Naive thymus-derived CD4-positive, alpha-beta T cell (primary cell): ENCODE measurements at regions of chr6 and their contacts with region 1.

Region 1: GRCh38 chr6:33271458-33272274 is at the starts of genes RPS18 and VPS52:
- DNase-seq: peak; percentile 84 to 97 (median 93)
- ATAC-seq: peak; percentile 91
- H3K4me3 ChIP-seq: peak within 1 kb of the TSS; percentile 93
- H3K4me3 Mint-ChIP-seq: peak within 1 kb of the TSS; percentile 87 to 100 (median 98)
- H3K27ac ChIP-seq: peak within 1 kb of the TSS; percentile 91
- H3K27ac Mint-ChIP-seq: peak within 1 kb of the TSS; percentile 95 to 100 (median 99)
- H3K4me1 ChIP-seq: peaks cover 41 to 44% of the 10 kb centered on the region in 2 donors
- H3K4me1 Mint-ChIP-seq: peaks cover 34 to 81% (median 66%) of the 10 kb centered on the region in 7 donors
- H3K27me3 ChIP-seq: no peaks in the 10 kb centered on the region
- H3K27me3 Mint-ChIP-seq: peaks cover 0 to 3% (median 0%) of the 10 kb centered on the region in 5 donors
- total RNA-seq, gene RPS18: 2,454 to 4,896 (median 3,431) TPM
- total RNA-seq, gene VPS52: 74.3 to 110 (median 90.5) TPM

Region 2: GRCh38 chr6:32843979-32844838 is 427.5 kb before region 1 on chr6 and contains the start of gene PSMB8:
- CTCF ChIA-PET with region 1: no interaction called
- POLR2A ChIA-PET with region 1: interaction called, 11 read pairs
- intact Hi-C with region 1: no loop called
- DNase-seq: peak; percentile 92 to 99 (median 97)
- ATAC-seq: peak; percentile 90
- H3K4me3 ChIP-seq: peak within 1 kb of the TSS; percentile 97
- H3K4me3 Mint-ChIP-seq: peak within 1 kb of the TSS; percentile 92 to 99 (median 98)
- H3K27ac ChIP-seq: peak within 1 kb of the TSS; percentile 97
- H3K27ac Mint-ChIP-seq: peak within 1 kb of the TSS; percentile 99 to 100 (median 100)
- H3K4me1 ChIP-seq: peaks cover 71 to 72% of the 10 kb centered on the region in 2 donors
- H3K4me1 Mint-ChIP-seq: peaks cover 66 to 83% (median 79%) of the 10 kb centered on the region in 7 donors
- H3K27me3 ChIP-seq: no peaks in the 10 kb centered on the region
- H3K27me3 Mint-ChIP-seq: no peaks in the 10 kb centered on the region
- total RNA-seq, gene PSMB8: 111 to 419 (median 115) TPM

Region 3: DNA sequence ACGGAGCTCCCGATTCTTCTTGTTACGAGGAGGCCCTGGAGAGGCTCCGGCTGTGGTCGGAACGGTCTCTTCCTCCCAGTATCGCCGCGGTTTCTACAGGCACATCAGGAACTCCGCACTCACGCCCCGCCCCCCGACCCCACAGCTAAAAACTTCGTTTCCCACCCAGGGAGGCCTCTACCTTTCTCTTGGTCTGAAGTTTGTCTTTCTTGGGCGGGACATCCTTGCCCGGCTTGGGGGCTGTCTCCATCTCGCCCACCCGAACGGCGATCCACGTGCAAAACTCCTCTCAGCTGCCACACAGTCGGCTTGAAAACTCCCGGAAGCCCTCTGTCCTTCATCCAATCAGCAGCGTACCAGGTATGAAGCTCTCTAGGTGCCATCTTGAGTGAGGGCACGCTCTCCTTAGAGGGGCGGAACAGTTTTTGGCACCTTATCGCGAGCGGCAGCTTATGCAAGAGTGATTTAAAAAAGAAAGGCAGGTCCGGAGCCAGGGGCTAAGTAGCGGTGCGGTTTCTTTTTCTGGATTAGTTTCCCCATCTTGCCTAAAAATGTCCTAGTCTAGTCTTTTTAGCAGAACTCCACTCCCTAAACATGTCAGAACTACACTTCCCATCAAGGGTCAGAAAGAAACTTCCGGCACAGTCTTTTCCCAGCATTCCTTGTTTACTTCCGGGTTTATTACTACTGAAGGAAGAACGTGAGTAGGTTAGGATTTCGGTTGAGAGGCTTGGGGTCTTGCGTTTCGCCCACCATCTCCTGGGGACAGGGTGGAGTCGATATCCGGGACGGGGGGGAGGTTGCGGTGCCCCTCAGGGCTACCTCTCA is 17.5 kb after region 1 on chr6 and contains the starts of genes PFDN6 and WDR46:
- CTCF ChIA-PET with region 1: interaction called, 11 read pairs
- POLR2A ChIA-PET with region 1: interaction called, 123 read pairs
- intact Hi-C with region 1: loop called (anchors 1 kb)
- DNase-seq: peak; percentile 55 to 90 (median 87)
- ATAC-seq: peak; percentile 96
- H3K4me3 ChIP-seq: peak within 1 kb of the TSS; percentile 97
- H3K4me3 Mint-ChIP-seq: peak within 1 kb of the TSS; percentile 89 to 99 (median 98)
- H3K27ac ChIP-seq: peak within 1 kb of the TSS; percentile 80
- H3K27ac Mint-ChIP-seq: peak within 1 kb of the TSS; percentile 89 to 98 (median 92)
- H3K4me1 ChIP-seq: peaks cover 19 to 20% of the 10 kb centered on the region in 2 donors
- H3K4me1 Mint-ChIP-seq: peaks cover 32 to 51% (median 45%) of the 10 kb centered on the region in 7 donors
- H3K27me3 ChIP-seq: no peaks in the 10 kb centered on the region
- H3K27me3 Mint-ChIP-seq: no peaks in the 10 kb centered on the region
- total RNA-seq, gene PFDN6: 14.6 to 73.2 (median 35.5) TPM
- total RNA-seq, gene WDR46: 25.3 to 62.7 (median 52.7) TPM

Region 4: DNA sequence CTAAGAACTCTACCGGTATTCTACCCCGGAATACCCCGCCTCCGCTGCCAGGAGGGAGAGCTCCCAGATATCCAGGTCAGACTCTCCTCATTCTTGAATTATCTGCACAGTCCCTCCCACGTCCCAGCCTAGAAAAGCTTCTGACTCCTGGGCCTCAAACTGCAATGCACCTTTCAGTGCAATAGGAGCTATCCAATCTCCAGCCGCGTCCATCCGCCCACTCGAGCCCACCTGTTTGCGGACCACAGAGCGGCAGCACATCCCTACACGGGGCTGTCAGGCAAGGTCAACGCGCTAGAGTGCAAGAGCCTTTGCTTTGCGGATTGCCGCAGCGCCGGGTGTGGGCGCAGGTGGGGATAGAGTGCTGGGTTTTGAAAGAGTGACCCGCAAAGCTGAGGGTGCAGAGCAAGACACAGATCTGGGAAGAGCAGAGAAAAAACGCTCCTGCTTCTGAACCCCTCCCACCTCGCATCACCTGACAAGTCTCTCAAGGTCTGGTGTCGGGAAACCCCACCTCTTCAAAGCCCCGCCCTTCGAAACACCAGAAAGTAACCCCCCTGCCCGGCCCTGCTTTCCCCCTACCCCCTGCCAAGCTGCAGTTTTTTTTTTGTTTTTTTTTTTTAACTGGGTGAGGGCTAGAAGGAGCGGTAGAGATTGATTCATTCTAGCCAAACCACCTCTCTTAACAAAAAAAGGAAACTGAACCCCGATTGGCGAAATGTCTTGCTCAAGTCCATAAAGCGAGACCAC is 40.9 kb after region 1 on chr6:
- CTCF ChIA-PET with region 1: interaction called, 6 read pairs
- POLR2A ChIA-PET with region 1: interaction called, 37 read pairs
- intact Hi-C with region 1: loop called (anchors 1 kb)
- DNase-seq: peak; percentile 51 to 94 (median 79)
- ATAC-seq: peak; percentile 65
- H3K4me3 ChIP-seq: peak overlapping the region; percentile 97
- H3K4me3 Mint-ChIP-seq: peak overlapping the region; percentile 81 to 100 (median 99)
- H3K27ac ChIP-seq: peak overlapping the region; percentile 99
- H3K27ac Mint-ChIP-seq: peak overlapping the region; percentile 97 to 99 (median 98)
- H3K4me1 ChIP-seq: peaks cover 33 to 38% of the 10 kb centered on the region in 2 donors
- H3K4me1 Mint-ChIP-seq: peaks cover 30 to 67% (median 54%) of the 10 kb centered on the region in 7 donors
- H3K27me3 ChIP-seq: no peaks in the 10 kb centered on the region
- H3K27me3 Mint-ChIP-seq: no peaks in the 10 kb centered on the region

Region 5: DNA sequence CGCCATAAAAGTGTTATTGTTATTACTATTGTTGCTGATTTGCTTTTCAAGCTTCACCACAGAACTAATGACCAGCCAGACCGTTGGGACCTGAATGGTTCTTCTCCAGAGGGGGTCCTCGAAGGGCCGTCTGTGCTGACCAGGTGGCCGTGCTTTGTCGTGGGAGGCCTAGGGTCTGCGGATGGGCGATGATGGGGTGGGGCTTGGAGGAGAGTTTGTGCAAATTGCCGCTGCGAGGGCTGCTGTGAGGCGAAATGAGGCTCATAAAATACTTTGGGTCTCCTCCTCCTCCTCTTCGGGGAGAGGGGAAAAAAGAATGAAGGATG is 51.9 kb after region 1 on chr6:
- CTCF ChIA-PET with region 1: interaction called, 6 read pairs
- POLR2A ChIA-PET with region 1: interaction called, 37 read pairs
- intact Hi-C with region 1: loop called (anchors 1 kb)
- DNase-seq: peak in 1 of 9 donors; percentile 26
- ATAC-seq: no peak
- H3K4me3 ChIP-seq: peak overlapping the region; percentile 64
- H3K4me3 Mint-ChIP-seq: peak overlapping the region; percentile 81 to 100 (median 98)
- H3K27ac ChIP-seq: peak overlapping the region; percentile 84
- H3K27ac Mint-ChIP-seq: peak overlapping the region; percentile 89 to 99 (median 97)
- H3K4me1 ChIP-seq: peaks cover 41% of the 10 kb centered on the region in 2 donors
- H3K4me1 Mint-ChIP-seq: peaks cover 34 to 59% (median 53%) of the 10 kb centered on the region in 7 donors
- H3K27me3 ChIP-seq: no peaks in the 10 kb centered on the region
- H3K27me3 Mint-ChIP-seq: peaks cover 0 to 4% (median 0%) of the 10 kb centered on the region in 5 donors

Region 6: DNA sequence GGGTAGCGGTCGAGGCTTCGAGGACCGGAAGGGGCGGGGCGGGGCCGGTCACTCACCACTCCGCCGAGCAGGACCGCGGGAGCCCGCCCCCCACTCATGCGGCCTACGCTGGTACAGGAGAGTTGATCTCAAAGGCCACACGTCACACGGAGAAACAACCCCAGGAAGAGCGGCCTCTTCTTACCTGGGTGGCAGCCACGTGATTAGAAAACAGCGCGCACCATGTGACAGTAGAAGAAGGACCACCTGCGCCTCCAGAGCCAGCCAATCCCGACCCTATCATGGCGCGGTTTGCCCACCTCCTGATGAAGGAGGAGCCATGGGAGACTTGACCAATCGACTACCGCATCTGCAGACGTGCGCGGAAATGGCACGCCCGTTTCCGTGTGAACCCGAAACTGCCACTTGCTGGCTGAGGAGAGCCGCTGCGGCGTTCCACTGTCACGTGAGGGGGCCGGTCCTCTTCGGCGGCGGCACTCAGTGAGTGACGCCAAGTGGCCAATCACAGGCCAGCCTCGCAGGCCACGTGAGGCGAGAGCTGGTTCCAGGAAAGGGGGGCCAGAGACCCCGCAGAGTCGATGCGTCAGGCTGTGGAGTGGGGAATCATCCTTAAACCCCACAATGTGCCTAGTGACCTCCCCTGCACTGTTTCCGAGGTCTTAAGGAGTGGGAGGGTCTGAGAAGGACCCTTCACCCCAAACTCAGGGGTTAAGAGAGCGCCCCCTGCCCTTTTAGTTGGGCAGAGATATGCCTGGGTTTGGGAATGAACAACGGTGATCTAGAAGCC is 146.4 kb after region 1 on chr6 and contains the start of gene CUTA:
- CTCF ChIA-PET with region 1: no interaction called
- POLR2A ChIA-PET with region 1: interaction called, 8 read pairs
- intact Hi-C with region 1: loop called in 1 of 2 experiments (anchors 1 kb)
- DNase-seq: peak; percentile 91 to 100 (median 99)
- ATAC-seq: peak; percentile 92
- H3K4me3 ChIP-seq: peak within 1 kb of the TSS; percentile 74
- H3K4me3 Mint-ChIP-seq: peak within 1 kb of the TSS; percentile 88 to 97 (median 94)
- H3K27ac ChIP-seq: peak within 1 kb of the TSS; percentile 94
- H3K27ac Mint-ChIP-seq: peak within 1 kb of the TSS; percentile 98 to 100 (median 99)
- H3K4me1 ChIP-seq: peaks cover 31 to 54% of the 10 kb centered on the region in 2 donors
- H3K4me1 Mint-ChIP-seq: peaks cover 60 to 89% (median 73%) of the 10 kb centered on the region in 7 donors
- H3K27me3 ChIP-seq: no peaks in the 10 kb centered on the region
- H3K27me3 Mint-ChIP-seq: no peaks in the 10 kb centered on the region
- total RNA-seq, gene CUTA: 148 to 235 (median 158) TPM